Activated CD8-positive, alpha-beta T cell treated with anti-CD3 and anti-CD28 coated beads for 36 hours (primary cell): ENCODE measurements at regions of chr17 and their contacts with region 1.

Region 1: GRCh38 chr17:11122908-11123307 is 118.1 kb upstream of the SHISA6 start:
- DNase-seq: no peak
- ATAC-seq: no peak
- H3K4me3 Mint-ChIP-seq: no peak overlapping the region
- H3K27ac Mint-ChIP-seq: no peak overlapping the region
- H3K4me1 Mint-ChIP-seq: no peaks in the 10 kb centered on the region
- H3K27me3 Mint-ChIP-seq: no peaks in the 10 kb centered on the region
- CTCF ChIP-seq: no peak

Region 2: DNA sequence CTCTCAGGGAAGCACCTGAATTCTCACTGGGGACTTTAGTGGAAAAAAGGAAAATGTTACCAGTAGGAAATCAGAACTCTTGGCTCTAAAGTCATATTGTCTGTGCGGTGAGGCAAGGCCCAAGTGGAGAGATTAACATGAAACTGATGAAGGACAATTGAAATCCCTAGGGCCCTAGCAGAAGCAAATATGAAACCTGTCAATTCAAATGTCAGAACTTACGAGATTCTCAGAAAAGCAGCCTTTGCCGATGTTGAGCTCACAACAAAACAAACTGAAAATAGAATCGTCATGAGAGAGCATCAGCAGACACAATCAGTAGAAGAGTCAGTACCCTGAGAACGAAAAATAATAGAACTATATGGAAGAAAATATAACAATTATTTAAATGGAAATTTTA is 1786.1 kb after region 1 on chr17:
- CTCF ChIA-PET with region 1: no interaction called
- POLR2A ChIA-PET with region 1: no interaction called
- intact Hi-C with region 1: loop called (anchors 10 kb)
- DNase-seq: no peak
- ATAC-seq: no peak
- H3K4me3 Mint-ChIP-seq: no peak overlapping the region
- H3K27ac Mint-ChIP-seq: no peak overlapping the region
- H3K4me1 Mint-ChIP-seq: no peaks in the 10 kb centered on the region
- H3K27me3 Mint-ChIP-seq: peaks cover 7% of the 10 kb centered on the region
- CTCF ChIP-seq: no peak